PC-9 (cell line): ENCODE measurements at regions of chr5 and their contacts with region 1.

Region 1: DNA sequence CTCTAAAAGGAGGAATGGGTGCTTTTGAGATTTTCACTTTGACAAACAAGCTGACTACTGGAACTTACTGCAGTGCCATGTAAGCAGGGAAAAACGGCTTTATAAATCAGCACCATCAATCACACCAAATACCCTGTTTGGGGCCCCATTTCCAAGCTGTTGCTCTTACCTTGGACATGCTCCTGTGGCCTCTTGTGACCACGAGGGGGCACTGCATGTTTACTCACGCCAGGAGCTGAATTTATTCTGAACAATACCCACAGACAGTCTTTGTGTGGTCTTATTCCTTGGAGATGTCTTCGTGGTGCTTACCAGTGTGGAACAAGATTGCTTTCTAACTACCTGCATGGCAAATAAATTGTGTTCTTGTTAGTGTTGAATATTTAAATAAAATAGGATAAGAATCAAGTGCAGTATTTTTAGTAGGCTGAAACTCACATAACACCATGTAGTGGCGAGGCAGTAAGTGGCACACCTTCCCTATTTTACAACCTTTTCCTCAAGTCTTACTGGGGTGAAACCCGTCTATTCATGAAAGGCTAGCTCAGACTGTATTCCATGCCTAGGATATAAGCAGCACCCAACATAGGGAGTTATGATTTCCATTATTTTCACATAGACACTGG is 155.5 kb upstream of the NMUR2 start:
- DNase-seq: peak in 1 of 2 experiments; percentile 31
- H3K4me3 ChIP-seq: no peak overlapping the region
- H3K27ac ChIP-seq: no peak overlapping the region
- H3K4me1 ChIP-seq: no peaks in the 10 kb centered on the region
- H3K27me3 ChIP-seq: no peaks in the 10 kb centered on the region
- CTCF ChIP-seq: peak; percentile 70

Region 2: DNA sequence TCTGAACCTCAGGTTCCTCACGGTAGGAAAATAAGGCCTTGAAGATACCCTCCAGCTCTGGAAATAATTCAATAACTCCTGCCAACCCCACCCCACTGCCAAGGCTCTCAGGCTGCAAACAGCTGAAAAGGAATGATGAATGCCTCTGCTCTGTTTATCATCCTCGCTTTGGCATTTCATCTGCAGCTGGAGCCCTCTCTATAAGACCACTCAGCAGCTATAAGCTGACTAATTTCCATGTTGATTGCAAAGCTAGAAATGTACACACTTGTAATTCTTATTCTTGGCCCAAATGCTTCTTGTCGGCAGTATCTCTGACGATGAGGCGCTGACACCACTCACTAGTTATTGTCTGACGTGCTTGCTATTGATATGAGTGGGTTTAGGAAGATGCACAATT is 252.9 kb after region 1 on chr5:
- CTCF ChIA-PET with region 1: no interaction called
- POLR2A ChIA-PET with region 1: no interaction called
- intact Hi-C with region 1: no loop called
- DNase-seq: no peak
- H3K4me3 ChIP-seq: no peak overlapping the region
- H3K27ac ChIP-seq: no peak overlapping the region
- H3K4me1 ChIP-seq: no peaks in the 10 kb centered on the region
- H3K27me3 ChIP-seq: no peaks in the 10 kb centered on the region
- CTCF ChIP-seq: no peak

Region 3: GRCh38 chr5:153964880-153965645 is 1404.4 kb after region 1 on chr5:
- CTCF ChIA-PET with region 1: interaction called, 6 read pairs
- POLR2A ChIA-PET with region 1: no interaction called
- intact Hi-C with region 1: loop called (anchors 1 kb)
- DNase-seq: peak in 1 of 2 experiments; percentile 51
- H3K4me3 ChIP-seq: no peak overlapping the region
- H3K27ac ChIP-seq: no peak overlapping the region
- H3K4me1 ChIP-seq: no peaks in the 10 kb centered on the region
- H3K27me3 ChIP-seq: peaks cover 31% of the 10 kb centered on the region
- CTCF ChIP-seq: peak; percentile 95